GM23248 (cell line): ENCODE measurements at regions of chr7 and their contacts with region 1.

Region 1: DNA sequence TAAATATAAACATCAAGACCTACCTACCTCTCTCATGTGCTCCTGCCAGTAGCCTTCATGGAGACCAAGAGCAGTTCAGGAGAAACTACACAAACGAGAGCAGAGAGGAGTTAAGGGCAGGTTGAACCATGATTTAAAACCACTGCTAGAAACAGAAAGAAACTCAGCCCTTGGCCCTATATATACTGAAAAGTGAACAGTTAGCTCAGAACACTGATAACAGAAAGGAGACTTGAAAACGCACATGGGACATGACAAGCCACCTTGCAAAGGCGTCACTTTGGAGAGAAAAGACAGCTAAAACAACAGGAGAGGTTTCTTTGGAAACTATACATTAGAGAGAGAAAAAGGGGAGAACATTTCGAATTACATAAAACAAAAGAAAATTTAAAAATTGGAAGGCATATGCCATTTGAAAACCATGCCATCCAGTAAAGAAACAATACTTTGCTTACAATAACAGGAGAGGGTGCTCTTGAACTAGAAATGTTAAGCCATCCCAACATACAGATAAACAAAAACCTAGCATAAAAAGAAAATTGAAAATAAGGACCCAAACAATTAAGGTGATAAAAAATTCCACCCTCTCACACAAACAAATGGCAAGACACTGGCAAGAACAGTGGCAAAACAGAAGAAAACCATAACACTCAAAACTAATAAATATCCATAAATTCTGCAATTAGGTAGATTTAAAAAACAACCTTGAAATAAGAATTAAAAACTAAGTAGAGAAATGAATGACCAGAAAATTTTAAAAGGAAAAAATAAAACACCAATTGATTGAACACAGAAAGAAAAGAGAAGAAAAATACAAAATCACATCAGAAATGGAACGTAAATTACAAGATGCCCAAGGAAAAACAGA is 232.7 kb downstream of the IMMP2L start:
- DNase-seq: peak; percentile 44
- H3K4me3 ChIP-seq: no peak overlapping the region
- H3K27ac ChIP-seq: no peak overlapping the region
- H3K4me1 ChIP-seq: no peaks in the 10 kb centered on the region
- H3K27me3 ChIP-seq: no peaks in the 10 kb centered on the region

Region 2: DNA sequence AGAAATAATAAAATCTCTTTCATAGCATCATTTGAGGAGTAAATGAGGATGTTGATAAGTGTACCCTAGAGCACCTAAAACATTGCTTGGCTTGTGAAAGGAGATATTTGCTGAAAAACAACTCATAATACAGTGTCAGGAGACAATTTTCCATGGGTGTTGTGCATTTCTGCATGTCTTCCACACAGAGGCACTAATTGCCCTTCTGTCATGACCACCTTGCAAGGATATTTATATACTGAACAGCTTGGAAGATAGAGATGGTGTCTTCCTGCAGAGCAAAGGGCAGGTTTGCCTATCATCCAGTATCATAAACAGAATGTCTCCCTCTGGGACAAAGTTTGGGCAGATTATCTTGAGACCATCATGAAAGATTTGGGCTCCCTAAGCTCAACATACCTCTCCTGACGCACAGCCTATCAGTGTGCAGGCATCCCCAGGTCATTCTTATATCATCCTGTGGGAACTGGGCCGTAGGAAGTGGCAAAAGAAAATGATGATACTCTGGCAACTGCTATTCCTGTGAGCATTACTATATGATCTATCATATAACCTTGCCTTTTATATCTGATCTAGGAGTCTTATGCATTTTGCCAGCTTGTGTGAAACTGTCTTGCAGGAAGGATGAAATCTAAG is 733.8 kb before region 1 on chr7:
- in situ Hi-C with region 1: no loop called
- DNase-seq: no peak
- H3K4me3 ChIP-seq: no peak overlapping the region
- H3K27ac ChIP-seq: no peak overlapping the region
- H3K4me1 ChIP-seq: no peaks in the 10 kb centered on the region
- H3K27me3 ChIP-seq: no peaks in the 10 kb centered on the region

Region 3: DNA sequence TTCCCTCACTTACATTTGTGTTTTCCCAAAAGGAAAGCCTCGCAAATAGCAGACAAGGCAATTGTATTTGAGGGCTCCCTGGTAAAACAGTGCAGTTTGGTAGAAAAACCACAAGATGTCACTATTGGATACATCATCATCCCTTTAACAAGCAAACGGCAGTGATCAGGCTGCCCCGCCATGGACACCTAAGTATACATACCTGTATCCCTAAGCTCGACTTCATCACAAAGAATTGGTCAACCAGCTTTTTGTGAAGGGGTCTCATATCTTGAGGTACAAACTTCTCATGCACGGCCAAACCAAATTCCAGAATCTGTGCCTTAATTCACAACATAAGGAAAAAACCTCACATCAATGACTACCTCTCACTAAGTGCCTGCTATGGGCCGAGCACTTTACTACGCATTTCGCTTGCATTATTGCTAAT is 412.2 kb after region 1 on chr7:
- in situ Hi-C with region 1: loop called (anchors 25 kb)
- DNase-seq: peak; percentile 70
- H3K4me3 ChIP-seq: no peak overlapping the region
- H3K27ac ChIP-seq: no peak overlapping the region
- H3K4me1 ChIP-seq: peaks cover 13% of the 10 kb centered on the region
- H3K27me3 ChIP-seq: no peaks in the 10 kb centered on the region